Ovary (tissue), 10 donors: ENCODE measurements at regions of chr3 and their contacts with region 1.

Region 1: DNA sequence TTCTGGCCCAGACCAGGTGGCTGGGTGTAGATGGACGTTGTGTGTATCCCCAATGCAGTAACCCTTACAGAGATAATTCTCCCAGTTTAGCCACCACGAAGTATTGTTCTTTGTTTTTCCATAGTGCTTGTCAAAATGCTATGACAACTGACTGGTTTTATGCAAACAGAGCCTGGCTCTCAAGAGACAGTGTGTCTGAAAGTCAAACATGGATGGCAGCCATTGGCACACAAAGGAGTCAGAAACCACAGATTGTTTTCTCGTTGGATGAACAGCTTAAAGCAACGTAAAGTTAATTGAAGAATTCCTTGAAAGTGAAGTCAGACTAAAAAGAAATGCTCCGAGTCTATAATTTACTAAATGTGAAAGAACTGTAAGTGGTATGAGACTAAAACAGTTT is 91.2 kb downstream of the FILIP1L start:
- DNase-seq: no peak
- H3K4me3 ChIP-seq: no peak overlapping the region
- H3K27ac ChIP-seq: peak overlapping the region in 1 of 2 donors; percentile 77
- H3K4me1 ChIP-seq: peaks cover 9% of the 10 kb centered on the region
- H3K27me3 ChIP-seq: no peaks in the 10 kb centered on the region
- CTCF ChIP-seq: no peak
- EP300 ChIP-seq: no peak
- POLR2A ChIP-seq: no peak

Region 2: GRCh38 chr3:100073899-100074307 is 50.8 kb after region 1 on chr3:
- intact Hi-C with region 1: loop called in 1 of 4 experiments (anchors 10 kb)
- DNase-seq: peak; percentile 57 to 63 (median 61)
- H3K4me3 ChIP-seq: no peak overlapping the region
- H3K27ac ChIP-seq: peak overlapping the region; percentile 31 to 63
- H3K4me1 ChIP-seq: peaks cover 13% of the 10 kb centered on the region
- H3K27me3 ChIP-seq: no peaks in the 10 kb centered on the region
- CTCF ChIP-seq: no peak
- EP300 ChIP-seq: no peak
- POLR2A ChIP-seq: peak; percentile 16